Dorsolateral prefrontal cortex (tissue), 120 donors: ENCODE measurements at regions of chr5 and their contacts with region 1.

Region 1: GRCh38 chr5:179907570-179908324 is at the start of gene TBC1D9B:
- DNase-seq: peak in 7 of 10 donors; percentile 43 to 76 (median 59)
- H3K4me3 ChIP-seq: peak within 1 kb of the TSS; percentile 38 to 82 (median 69)
- H3K27ac ChIP-seq: peak within 1 kb of the TSS; percentile 59 to 95 (median 86)
- H3K27me3 ChIP-seq: no peaks in the 10 kb centered on the region
- CTCF ChIP-seq: peak in 51 of 56 donors; percentile 8 to 66 (median 47)
- total RNA-seq, gene TBC1D9B: 127 to 231 (median 166) TPM

Region 2: DNA sequence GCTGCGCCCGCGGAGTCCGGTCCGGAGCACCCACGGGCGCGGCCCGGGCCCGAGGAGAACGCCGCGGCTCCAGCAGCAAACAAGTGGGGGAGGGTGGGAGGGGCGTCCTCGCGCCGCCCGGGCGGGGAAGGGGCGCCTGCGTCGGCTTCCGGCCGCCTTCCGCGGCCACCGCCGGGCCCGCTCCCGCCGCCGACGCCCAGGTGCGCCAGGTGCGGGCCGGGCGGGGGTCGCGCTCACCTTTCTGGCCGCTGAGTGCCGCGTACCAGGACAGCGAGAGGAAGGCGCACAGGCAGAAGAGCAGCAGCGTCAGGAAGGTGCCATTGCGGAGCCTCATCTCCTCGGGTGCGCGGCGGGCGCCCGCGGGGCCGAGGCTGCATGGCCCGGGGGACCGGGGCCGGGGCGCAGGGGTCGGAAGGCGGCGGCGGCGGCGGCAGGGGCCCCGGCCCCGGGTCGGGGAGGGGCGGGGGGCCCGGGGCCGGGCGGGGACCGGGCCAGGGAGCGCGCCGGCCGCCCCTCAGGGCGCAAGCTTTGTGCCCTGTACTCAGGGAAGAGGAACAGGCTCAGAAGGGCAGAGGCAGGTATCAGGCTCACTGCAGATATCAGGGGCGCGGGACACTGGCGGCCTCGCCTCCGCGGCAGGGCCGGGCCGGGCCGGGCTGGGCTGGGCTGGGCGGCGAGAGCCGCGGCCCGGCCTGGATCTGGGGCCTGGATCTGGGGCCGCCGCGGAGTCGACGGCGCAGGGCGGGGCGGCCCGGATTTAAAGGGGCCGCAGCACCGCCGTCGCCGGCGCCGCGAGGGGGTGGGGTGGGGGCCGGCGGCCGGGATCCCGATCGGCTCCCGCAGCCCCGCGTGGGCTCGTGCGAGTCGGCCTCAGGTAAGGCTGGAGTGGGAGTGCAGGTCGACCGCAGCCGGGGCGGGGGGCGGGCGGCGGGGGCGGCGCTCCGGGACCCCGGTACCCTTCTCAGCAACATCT is 101.2 kb before region 1 on chr5 and contains the start of gene MGAT4B:
- intact Hi-C with region 1: loop called in 1 of 2 experiments (anchors 5 kb)
- DNase-seq: peak in 5 of 10 donors; percentile 54 to 87 (median 76)
- H3K4me3 ChIP-seq: peak within 1 kb of the TSS; percentile 70 to 98 (median 91)
- H3K27ac ChIP-seq: peak within 1 kb of the TSS; percentile 80 to 98 (median 94)
- H3K27me3 ChIP-seq: no peaks in the 10 kb centered on the region
- CTCF ChIP-seq: peak in 3 of 56 donors; percentile 4 to 24 (median 19)
- total RNA-seq, gene MGAT4B: 46.9 to 108 (median 65.7) TPM

Region 3: GRCh38 chr5:179821581-179822432 is 85.9 kb before region 1 on chr5:
- intact Hi-C with region 1: loop called in 1 of 2 experiments (anchors 10 kb)
- DNase-seq: peak; percentile 76 to 94 (median 90)
- H3K4me3 ChIP-seq: peak overlapping the region; percentile 77 to 100 (median 98)
- H3K27ac ChIP-seq: peak overlapping the region; percentile 93 to 100 (median 99)
- H3K27me3 ChIP-seq: no peaks in the 10 kb centered on the region
- CTCF ChIP-seq: peak in 20 of 56 donors; percentile 5 to 30 (median 18)

Region 4: GRCh38 chr5:179974946-179975712 is 67.4 kb after region 1 on chr5:
- intact Hi-C with region 1: loop called (anchors 5 to 10 kb)
- DNase-seq: peak; percentile 43 to 73 (median 60)
- H3K4me3 ChIP-seq: peak overlapping the region in 14 of 59 donors; percentile 6 to 34 (median 13)
- H3K27ac ChIP-seq: peak overlapping the region in 51 of 59 donors; percentile 7 to 92 (median 59)
- H3K27me3 ChIP-seq: no peaks in the 10 kb centered on the region
- CTCF ChIP-seq: peak in 55 of 56 donors; percentile 25 to 73 (median 51)

Region 5: GRCh38 chr5:180084688-180085561 is 177.2 kb after region 1 on chr5:
- intact Hi-C with region 1: loop called in 1 of 2 experiments (anchors 5 kb)
- DNase-seq: no peak
- H3K4me3 ChIP-seq: peak overlapping the region in 2 of 59 donors; percentile 11 to 50
- H3K27ac ChIP-seq: peak overlapping the region in 30 of 59 donors; percentile 1 to 89 (median 72)
- H3K27me3 ChIP-seq: peaks cover 0 to 4% (median 0%) of the 10 kb centered on the region in 45 donors
- CTCF ChIP-seq: no peak